Activated CD4-positive, alpha-beta T cell treated with anti-CD3 and anti-CD28 coated beads, Interleukin-2, amount 10 ng/mL, durations not matched to agents 24 days and 14 days (primary cell): ENCODE measurements at regions of chr1 and their contacts with region 1.

Region 1: GRCh38 chr1:209769171-209769904 is 13.5 kb downstream of the TRAF3IP3 start:
- DNase-seq: peak; percentile 93
- H3K4me3 Mint-ChIP-seq: no peak overlapping the region
- H3K27ac Mint-ChIP-seq: no peak overlapping the region
- H3K4me1 Mint-ChIP-seq: peaks cover 39% of the 10 kb centered on the region
- H3K27me3 Mint-ChIP-seq: no peaks in the 10 kb centered on the region

Region 2: GRCh38 chr1:209601809-209602657 is 167.3 kb before region 1 on chr1:
- intact Hi-C with region 1: loop called (anchors 1 kb)
- DNase-seq: peak; percentile 77
- H3K4me3 Mint-ChIP-seq: no peak overlapping the region
- H3K27ac Mint-ChIP-seq: no peak overlapping the region
- H3K4me1 Mint-ChIP-seq: peaks cover 8% of the 10 kb centered on the region
- H3K27me3 Mint-ChIP-seq: peaks cover 32% of the 10 kb centered on the region

Region 3: DNA sequence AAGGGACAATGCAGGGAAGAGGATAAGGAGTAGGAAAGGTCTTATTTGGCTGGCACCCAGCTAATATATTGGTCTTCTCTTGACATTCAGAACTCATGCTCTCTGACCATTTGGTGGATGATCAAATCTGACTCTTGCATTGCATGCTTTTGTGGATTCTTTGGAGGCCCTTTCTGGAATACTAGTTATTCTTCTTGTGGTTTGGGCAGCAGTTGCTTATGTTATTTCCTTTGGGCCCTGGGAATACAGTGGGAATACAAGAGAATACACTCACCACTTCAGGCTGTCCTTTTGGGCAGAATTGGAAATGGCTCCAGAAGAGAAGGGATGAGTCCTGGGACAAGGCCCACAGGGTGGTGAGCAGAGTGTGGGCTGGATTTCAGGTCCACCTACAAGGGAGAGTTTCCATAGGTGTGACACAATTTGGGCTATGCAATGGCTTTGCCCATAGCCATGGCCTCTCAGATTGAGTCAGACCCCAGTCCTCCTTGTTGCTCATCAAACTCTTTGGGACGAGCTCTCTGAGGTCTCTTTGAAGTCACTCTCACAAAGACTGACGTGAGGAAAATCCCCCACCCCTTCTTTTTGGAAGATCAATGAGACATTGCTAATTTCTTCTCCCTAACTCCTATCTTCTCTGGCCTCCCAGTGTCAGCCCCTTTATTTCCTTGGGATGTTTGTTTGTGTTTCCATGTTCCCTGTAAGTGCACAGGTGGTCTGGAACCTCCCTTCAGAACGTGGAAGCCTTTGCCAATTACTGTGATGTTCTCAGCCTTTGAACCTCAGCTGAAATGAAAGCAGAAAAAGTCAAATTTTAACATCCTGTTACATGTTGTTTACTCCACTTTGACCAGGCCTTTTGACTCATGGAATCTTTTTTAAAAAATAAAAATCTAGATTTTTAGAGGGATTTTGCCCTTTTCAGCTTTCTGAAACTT is 45.3 kb before region 1 on chr1:
- intact Hi-C with region 1: loop called (anchors 1 kb)
- DNase-seq: peak; percentile 83
- H3K4me3 Mint-ChIP-seq: peak overlapping the region; percentile 47
- H3K27ac Mint-ChIP-seq: peak overlapping the region; percentile 100
- H3K4me1 Mint-ChIP-seq: peaks cover 55% of the 10 kb centered on the region
- H3K27me3 Mint-ChIP-seq: no peaks in the 10 kb centered on the region

Region 4: GRCh38 chr1:209736490-209737117 is 32.7 kb before region 1 on chr1:
- intact Hi-C with region 1: loop called (anchors 1 kb)
- DNase-seq: no peak
- H3K4me3 Mint-ChIP-seq: peak overlapping the region; percentile 34
- H3K27ac Mint-ChIP-seq: peak overlapping the region; percentile 93
- H3K4me1 Mint-ChIP-seq: peaks cover 54% of the 10 kb centered on the region
- H3K27me3 Mint-ChIP-seq: no peaks in the 10 kb centered on the region

Region 5: GRCh38 chr1:209755926-209756614 is 13.3 kb before region 1 on chr1 and contains the start of gene TRAF3IP3:
- intact Hi-C with region 1: loop called (anchors 1 kb)
- DNase-seq: peak; percentile 94
- H3K4me3 Mint-ChIP-seq: peak within 1 kb of the TSS; percentile 94
- H3K27ac Mint-ChIP-seq: peak within 1 kb of the TSS; percentile 98
- H3K4me1 Mint-ChIP-seq: peaks cover 69% of the 10 kb centered on the region
- H3K27me3 Mint-ChIP-seq: no peaks in the 10 kb centered on the region
- total RNA-seq, gene TRAF3IP3: 392 and 394 TPM in 2 replicates

Region 6: DNA sequence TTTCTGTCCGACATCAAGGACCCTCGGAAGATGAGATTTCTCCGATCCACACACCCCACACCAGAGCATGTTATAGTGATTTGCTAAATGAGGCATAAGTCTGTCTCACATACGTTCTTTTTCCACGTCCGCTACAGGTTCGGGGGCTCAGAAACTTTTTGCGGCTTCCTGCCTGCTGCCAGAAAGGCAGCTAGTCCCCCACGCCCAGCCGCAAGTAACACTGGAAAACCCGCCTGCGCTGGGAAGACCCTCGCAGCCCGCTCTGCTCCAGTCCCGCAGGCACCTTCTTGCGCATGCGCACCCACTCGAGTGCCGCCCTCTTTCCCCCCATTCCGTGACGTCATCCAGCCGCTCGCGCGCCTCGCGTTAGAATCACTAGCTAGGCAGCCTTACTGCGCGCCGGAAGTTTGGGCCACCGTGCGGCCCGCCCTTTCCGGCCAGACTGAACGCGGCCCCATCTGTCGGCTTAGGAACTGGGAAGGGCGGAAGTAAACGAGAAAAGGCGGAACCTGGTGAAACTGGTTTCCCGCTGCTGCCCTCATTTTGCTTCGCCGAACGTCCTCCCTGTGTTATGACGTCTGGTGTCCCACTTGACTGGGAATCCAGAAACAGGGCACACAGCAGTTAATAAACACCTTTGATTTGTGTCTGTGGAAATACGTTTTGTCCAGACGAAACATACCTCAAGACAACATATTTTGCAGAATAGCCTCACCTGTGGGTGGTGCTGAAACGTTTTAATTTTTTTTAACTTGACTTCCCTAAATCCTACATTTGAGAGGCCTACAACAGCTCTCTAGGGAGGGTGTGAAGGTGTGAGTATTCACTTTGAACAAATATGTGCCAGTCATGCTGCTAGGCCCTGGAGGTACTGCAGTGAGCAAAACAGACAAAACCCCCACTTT is 15.2 kb after region 1 on chr1 and contains the start of gene C1orf74:
- intact Hi-C with region 1: loop called (anchors 1 kb)
- DNase-seq: peak; percentile 100
- H3K4me3 Mint-ChIP-seq: peak within 1 kb of the TSS; percentile 98
- H3K27ac Mint-ChIP-seq: peak within 1 kb of the TSS; percentile 99
- H3K4me1 Mint-ChIP-seq: peaks cover 51% of the 10 kb centered on the region
- H3K27me3 Mint-ChIP-seq: peaks cover 3% of the 10 kb centered on the region
- total RNA-seq, gene C1orf74: 2.4 and 3.2 TPM in 2 replicates

Region 7: DNA sequence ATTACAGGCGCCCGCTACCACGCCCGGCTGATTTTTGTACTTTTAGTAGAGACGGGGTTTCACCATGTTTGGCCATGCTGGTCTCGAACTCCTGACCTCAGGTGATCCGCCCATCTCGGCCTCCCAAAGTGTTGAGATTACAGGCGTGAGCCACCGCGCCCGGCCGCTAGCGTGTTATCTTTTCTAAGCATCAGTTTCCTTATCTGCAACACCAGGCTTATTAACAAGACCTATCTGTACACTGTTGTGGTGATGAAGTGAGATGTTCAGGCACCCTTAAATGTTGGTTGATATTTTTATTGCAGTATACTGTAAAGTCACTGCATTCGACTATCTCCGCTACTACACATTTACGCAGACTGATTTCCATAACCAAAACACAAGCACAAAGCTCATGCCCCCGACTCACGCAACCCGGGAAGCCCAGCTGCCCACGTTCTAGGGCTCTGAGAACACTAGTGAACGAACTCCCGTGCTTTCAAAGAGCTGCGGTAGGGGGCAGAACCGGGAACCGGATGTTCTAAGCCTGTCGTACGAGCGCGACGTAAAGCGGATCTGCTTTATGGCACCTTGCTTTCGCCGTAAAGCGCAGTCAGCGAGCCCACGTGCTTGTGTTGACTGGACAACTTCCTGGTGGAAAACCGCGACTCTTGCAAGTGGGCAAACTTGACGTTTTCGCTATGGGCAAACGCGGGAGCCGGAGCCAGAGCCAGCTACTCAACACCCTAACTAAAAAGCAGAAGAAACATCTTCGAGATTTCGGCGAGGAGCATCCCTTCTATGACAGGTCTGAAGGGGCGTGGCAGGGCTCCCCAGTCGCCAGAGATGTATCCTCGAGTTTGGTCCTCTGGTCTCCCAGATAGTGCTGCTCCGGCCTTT is 58.3 kb after region 1 on chr1 and contains the start of gene UTP25:
- intact Hi-C with region 1: loop called (anchors 1 kb)
- DNase-seq: peak; percentile 98
- H3K4me3 Mint-ChIP-seq: peak within 1 kb of the TSS; percentile 93
- H3K27ac Mint-ChIP-seq: peak within 1 kb of the TSS; percentile 86
- H3K4me1 Mint-ChIP-seq: peaks cover 43% of the 10 kb centered on the region
- H3K27me3 Mint-ChIP-seq: peaks cover 4% of the 10 kb centered on the region
- total RNA-seq, gene UTP25: 17.2 and 17.6 TPM in 2 replicates

Region 8: GRCh38 chr1:209895709-209896108 is 126.4 kb after region 1 on chr1:
- intact Hi-C with region 1: no loop called
- DNase-seq: peak; percentile 54
- H3K4me3 Mint-ChIP-seq: peak overlapping the region; percentile 3
- H3K27ac Mint-ChIP-seq: peak overlapping the region; percentile 57
- H3K4me1 Mint-ChIP-seq: peaks cover 9% of the 10 kb centered on the region
- H3K27me3 Mint-ChIP-seq: peaks cover 8% of the 10 kb centered on the region